ENCODE measurements at regions of chr1 and their contacts with region 1.

Region 1: DNA sequence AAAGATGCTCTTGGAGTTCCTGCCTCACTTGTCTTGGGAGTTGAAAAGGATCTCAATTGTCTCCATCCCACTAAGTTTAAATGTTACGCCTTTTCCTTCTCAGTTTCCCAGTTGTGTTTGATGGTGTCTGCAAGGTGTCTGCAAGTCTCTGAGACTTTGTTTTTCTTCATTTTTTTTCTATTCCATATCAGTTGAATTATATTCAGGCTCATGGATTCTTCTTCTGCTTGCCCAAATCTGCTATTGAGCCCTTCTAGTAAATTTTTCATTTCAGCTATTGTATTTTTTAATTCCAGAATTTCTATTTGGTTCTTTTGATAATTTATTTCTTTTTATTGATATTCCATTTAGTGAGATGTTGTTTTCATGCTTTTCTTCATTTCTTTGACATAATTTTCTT is 47.4 kb upstream of the TSHB start:
- DNase-seq: no peak
- H3K4me3 ChIP-seq: no peak overlapping the region
- H3K27ac ChIP-seq: no peak overlapping the region
- H3K4me1 ChIP-seq: no peaks in the 10 kb centered on the region
- H3K27me3 ChIP-seq: no peaks in the 10 kb centered on the region
- CTCF ChIP-seq: no peak
- EP300 ChIP-seq: no peak
- POLR2A ChIP-seq: no peak

Region 2: GRCh38 chr1:115112496-115113375 is 130.5 kb after region 1 on chr1:
- intact Hi-C with region 1: loop called (anchors 5 kb)
- DNase-seq: peak; percentile 40 to 69
- H3K4me3 ChIP-seq: no peak overlapping the region
- H3K27ac ChIP-seq: no peak overlapping the region
- H3K4me1 ChIP-seq: peaks cover 0 to 7% (median 3%) of the 10 kb centered on the region in 4 donors
- H3K27me3 ChIP-seq: no peaks in the 10 kb centered on the region
- CTCF ChIP-seq: peak in 6 of 7 experiments; percentile 51 to 91 (median 84)
- EP300 ChIP-seq: no peak
- POLR2A ChIP-seq: no peak

Measured in stomach (tissue), 19 donors.